Mucosa of descending colon (tissue), 3 donors: ENCODE measurements at regions of chr7 and their contacts with region 1.

Region 1: GRCh38 chr7:5494683-5495561 is 71.3 kb upstream of the TNRC18 start:
- DNase-seq: peak; percentile 80 to 85 (median 80)
- ATAC-seq: peak; percentile 95
- H3K4me3 ChIP-seq: no peak overlapping the region
- H3K4me1 ChIP-seq: peaks cover 8% of the 10 kb centered on the region
- CTCF ChIP-seq: peak; percentile 85

Region 2: GRCh38 chr7:5665094-5666025 is 170.4 kb after region 1 on chr7:
- intact Hi-C with region 1: loop called (anchors 10 kb)
- DNase-seq: peak in 2 of 3 donors; percentile 45 to 90
- ATAC-seq: peak; percentile 90
- H3K4me3 ChIP-seq: no peak overlapping the region
- H3K4me1 ChIP-seq: no peaks in the 10 kb centered on the region
- CTCF ChIP-seq: peak; percentile 41

Region 3: DNA sequence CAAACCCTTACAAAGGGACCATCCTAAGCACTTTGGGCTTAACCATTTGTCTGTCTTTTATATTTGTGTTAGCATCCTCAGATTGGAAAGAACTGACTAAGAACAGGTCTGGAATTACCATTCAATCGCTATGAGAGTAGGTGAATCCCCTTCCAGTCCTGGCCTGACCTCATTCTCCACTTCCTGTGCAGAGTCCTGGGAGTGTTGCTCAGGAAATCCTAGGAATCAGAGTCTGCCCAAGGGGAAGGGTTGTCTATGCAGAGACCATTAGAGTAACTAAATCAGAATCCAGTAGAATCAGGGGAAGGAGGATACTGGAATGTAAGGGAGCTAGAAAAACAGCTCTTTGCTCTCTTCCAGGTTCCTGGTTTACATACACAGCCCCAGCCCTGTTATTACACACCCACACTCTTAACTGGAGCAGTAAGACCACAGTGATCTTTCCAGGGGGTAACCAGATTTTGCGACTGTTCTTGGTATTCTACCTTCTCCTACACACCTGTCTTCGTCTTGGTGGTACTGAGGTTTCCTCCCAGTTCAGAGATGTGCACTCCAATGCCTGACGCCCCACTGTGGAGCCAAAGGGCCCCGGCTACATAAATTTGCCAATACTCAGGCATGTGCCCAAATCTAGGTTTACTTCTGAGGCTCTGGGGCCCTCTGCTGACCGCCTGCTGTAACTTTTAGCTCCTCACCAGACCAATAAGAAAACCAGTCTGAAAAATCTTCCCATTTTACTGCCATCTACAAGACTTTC is 182.8 kb after region 1 on chr7:
- intact Hi-C with region 1: loop called in 1 of 2 experiments (anchors 10 kb)
- DNase-seq: peak in 2 of 3 donors; percentile 50 to 58
- ATAC-seq: peak; percentile 72
- H3K4me3 ChIP-seq: no peak overlapping the region
- H3K4me1 ChIP-seq: no peaks in the 10 kb centered on the region
- CTCF ChIP-seq: peak; percentile 23

Region 4: DNA sequence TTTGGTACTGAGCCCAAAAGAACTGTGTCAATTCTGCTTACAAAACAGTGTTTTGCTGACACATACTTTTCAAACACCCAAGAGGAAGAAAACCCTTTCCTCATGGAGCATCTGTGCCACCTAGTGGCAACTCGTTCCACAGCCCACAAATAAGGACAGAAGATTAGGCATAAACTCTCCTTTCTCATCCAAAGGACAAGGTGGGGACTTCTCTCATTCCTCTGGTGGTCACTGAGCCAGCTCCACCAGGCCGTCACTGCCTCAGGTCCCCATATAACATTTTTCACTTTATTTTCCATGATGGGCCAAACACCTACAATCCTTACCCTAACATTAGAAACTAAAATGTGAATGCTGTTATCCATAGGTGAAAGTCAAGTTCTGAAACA is 209.6 kb after region 1 on chr7:
- intact Hi-C with region 1: loop called (anchors 10 kb)
- DNase-seq: peak in 2 of 3 donors; percentile 66 to 89
- ATAC-seq: peak; percentile 85
- H3K4me3 ChIP-seq: no peak overlapping the region
- H3K4me1 ChIP-seq: peaks cover 2% of the 10 kb centered on the region
- CTCF ChIP-seq: peak; percentile 67